Endothelial cell of umbilical vein (primary cell): ENCODE measurements at regions of chr1 and their contacts with region 1.

Region 1: DNA sequence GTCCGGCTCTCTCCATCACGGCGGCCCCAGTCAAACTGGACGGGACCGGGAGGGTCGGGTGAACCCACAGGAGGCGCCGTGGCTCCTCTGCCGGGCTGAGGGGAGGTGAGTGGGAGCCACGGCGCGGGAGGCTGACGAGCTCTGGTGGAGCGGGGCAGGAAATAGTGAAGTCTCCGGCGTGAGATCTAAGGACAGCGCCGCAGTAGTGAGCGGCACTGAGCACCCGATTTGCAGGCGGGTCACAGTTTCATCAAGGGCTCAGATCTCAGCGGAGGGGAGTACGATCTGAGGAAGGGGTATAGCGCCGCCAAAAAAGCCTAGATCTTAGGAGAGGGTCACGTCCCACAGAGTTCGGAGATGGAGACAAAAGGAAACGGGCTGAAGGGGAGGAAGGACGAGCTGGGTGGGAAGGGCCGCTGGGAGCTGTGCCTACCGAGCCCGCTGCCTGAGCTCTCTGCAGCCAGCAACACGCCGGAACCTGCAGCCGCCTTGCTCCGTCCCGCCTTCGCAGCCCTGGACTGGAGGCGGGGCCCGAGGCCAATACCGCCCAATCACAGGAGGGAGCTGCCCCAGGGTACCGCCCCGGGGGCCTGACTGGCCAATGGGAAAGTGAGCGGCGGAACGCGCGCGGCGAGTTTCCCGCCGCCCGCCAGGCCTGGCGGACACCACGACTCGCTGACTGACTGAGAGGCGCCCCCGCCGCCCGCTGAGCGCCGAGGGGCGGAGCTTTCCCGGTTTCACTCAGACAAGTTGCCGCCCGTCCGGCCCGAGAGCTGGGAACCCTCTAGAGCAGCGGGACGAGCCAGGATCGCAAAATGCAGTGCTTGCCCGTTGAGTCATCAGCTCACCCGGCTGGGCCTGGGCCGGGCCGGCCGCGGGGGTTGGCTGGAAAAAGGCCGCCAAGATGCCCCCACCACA is 1.9 kb downstream of the SFN start:
- DNase-seq: peak; percentile 99
- H3K4me3 ChIP-seq: peak overlapping the region; percentile 38 to 73 (median 52)
- H3K27ac ChIP-seq: peak overlapping the region; percentile 91
- H3K4me1 ChIP-seq: peaks cover 11% of the 10 kb centered on the region
- H3K27me3 ChIP-seq: no peaks in the 10 kb centered on the region
- CTCF ChIP-seq: peak in 1 of 2 donors; percentile 8
- POLR2A ChIP-seq: peak; percentile 94

Region 2: DNA sequence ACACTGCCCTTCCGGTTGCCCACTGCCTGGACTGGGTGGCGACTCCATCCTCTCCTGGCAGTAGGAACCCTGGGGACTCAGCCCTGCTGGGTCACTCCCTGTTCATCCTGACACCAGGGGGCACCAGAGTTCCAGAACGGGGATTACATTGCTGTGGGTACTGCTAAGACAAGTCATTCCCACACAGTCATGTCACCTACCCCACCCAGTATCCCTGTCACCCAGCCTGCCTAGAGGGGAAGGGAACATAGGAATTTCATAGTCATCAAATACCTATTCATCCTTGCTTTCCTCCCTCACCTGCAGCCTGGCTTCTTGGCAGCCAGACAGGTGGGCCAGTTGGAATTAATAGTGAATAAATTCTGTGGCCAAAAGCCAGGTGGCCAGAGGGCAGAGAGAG is 11.7 kb before region 1 on chr1:
- CTCF ChIA-PET with region 1: interaction called, 21 read pairs
- POLR2A ChIA-PET with region 1: interaction called, 4 read pairs
- dilution Hi-C with region 1: no loop called
- intact Hi-C with region 1: loop called (anchors 1 kb)
- DNase-seq: peak; percentile 79
- H3K4me3 ChIP-seq: no peak overlapping the region
- H3K27ac ChIP-seq: no peak overlapping the region
- H3K4me1 ChIP-seq: peaks cover 9% of the 10 kb centered on the region
- H3K27me3 ChIP-seq: no peaks in the 10 kb centered on the region
- CTCF ChIP-seq: peak; percentile 85 to 89
- POLR2A ChIP-seq: no peak

Region 3: DNA sequence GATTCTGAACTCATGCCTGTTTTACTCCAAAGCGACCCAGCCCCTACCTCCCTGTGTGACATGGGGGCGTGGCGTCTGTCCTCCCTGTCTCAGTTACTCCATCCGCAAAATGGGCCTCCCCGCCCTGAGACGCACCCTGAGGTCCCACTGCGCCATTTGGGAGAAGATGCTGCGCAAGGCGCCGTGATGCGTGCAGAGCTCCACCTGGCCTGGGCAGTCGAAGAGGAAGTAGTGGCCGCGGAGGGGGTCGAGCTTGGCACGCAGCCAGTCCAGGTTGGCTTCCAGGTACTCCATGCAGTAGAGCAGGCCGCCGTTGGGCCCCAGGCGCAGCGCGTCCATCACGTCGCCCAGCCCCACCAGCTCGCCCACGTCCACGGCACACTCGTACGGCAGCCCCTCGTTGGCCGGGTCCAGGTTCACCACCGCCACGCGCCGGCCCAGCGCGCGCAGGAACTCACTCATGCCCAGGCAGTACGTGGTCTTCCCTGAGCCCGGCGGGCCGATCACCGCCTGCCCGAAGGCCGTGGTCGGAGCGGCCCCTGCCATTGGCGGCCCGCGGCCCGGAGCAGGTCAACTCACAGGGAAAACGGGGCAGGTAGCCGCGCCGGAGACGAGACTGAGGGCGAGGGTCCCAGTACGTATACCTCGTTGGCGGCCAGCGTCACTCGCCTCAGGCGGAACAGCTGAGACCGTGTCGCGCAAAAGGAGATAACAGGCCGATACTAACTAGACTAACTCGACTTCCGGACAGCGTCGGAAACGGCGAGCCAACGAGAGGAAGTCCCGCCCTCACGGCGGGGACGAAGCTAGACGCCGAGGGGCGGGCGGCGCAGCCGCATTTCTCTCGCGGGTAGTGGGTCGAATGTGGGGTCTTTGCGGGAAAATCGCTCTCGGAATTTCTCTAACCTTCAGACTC is 24.9 kb after region 1 on chr1 and contains the start of gene GPN2:
- CTCF ChIA-PET with region 1: interaction called, 10 read pairs
- POLR2A ChIA-PET with region 1: interaction called, 6 read pairs
- dilution Hi-C with region 1: no loop called
- intact Hi-C with region 1: no loop called
- DNase-seq: peak; percentile 87
- H3K4me3 ChIP-seq: peak within 1 kb of the TSS; percentile 18 to 82 (median 54)
- H3K27ac ChIP-seq: peak within 1 kb of the TSS; percentile 46
- H3K4me1 ChIP-seq: peaks cover 6% of the 10 kb centered on the region
- H3K27me3 ChIP-seq: no peaks in the 10 kb centered on the region
- CTCF ChIP-seq: no peak
- POLR2A ChIP-seq: peak; percentile 95
- total RNA-seq, gene GPN2: 36.7 and 37.4 TPM in 2 replicates